ENCODE measurements at regions of chr22 and their contacts with region 1.

Region 1: GRCh38 chr22:27885977-27886842 is 32.8 kb downstream of the PITPNB start:
- DNase-seq: peak; percentile 44
- CTCF ChIP-seq: peak; percentile 54

Region 2: DNA sequence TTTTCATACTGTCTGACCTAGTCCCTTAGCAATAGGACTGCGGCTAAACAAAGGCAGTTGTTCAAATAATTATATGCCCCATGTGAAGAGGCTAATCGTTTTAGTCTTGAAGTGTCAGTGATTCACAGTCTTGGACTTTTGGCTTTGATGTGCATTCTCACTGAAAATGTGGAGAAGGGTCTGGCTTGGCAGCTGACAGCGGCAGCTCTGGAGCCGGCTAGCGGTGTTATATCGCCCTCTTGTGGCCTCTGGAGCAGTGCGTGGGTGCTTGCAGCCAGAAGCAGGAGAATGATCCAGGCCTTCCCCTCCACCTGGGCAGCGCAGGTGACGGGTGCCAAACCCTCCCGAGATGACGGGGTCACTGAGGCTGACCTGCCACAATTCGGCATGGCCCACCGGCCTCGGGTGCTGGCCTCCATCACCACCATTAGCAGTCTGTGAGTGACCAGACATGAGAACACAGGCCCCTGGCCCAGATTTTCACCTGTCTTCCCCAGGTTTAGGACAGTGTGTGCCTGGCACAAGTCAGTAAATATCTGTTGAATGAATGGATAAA is 123.1 kb after region 1 on chr22:
- in situ Hi-C with region 1: loop called (anchors 5 kb)
- DNase-seq: peak; percentile 91
- CTCF ChIP-seq: peak; percentile 97